Head of caudate nucleus (tissue), 42 donors: ENCODE measurements at regions of chr6 and their contacts with region 1.

Region 1: DNA sequence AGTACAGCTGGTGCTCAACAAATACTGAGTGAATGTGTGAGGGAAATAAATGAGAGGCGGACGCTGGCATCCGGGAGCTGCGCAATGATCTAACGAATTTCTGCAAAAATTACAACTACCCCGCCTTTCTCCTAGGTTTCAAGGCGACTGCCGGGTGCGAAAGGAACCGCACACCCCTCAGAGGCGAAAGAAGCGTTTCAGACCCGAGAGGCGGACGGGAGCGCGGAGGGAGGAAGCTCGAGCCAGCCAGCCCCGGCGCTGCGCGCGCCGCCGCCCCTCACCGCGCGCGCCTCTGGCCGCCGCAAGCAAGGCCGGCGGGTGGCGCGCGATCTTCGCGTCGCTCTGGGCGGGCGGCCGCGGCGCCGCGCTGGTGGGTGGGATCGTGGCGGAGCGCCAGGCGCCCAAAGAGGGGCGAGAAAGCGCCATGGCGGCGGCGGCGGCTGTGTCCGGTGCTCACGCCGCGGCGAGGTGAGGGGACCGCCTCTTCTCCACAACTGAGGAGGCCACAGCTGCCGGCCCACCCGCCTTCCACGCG is at the start of gene BLTP3A:
- DNase-seq: peak in 41 of 42 donors; percentile 20 to 87 (median 73)

Region 2: GRCh38 chr6:34887753-34888513 is 96.2 kb after region 1 on chr6 and contains the start of gene TAF11:
- intact Hi-C with region 1: loop called (anchors 10 kb)
- DNase-seq: peak; percentile 82 to 97 (median 93)